ENCODE measurements at regions of chr14 and their contacts with region 1.

Region 1: GRCh38 chr14:66662374-66662773 is 154.4 kb downstream of the GPHN start:
- DNase-seq: no peak
- H3K4me3 Mint-ChIP-seq: no peak overlapping the region
- H3K27ac Mint-ChIP-seq: no peak overlapping the region
- H3K4me1 Mint-ChIP-seq: no peaks in the 10 kb centered on the region
- H3K27me3 Mint-ChIP-seq: no peaks in the 10 kb centered on the region

Region 2: DNA sequence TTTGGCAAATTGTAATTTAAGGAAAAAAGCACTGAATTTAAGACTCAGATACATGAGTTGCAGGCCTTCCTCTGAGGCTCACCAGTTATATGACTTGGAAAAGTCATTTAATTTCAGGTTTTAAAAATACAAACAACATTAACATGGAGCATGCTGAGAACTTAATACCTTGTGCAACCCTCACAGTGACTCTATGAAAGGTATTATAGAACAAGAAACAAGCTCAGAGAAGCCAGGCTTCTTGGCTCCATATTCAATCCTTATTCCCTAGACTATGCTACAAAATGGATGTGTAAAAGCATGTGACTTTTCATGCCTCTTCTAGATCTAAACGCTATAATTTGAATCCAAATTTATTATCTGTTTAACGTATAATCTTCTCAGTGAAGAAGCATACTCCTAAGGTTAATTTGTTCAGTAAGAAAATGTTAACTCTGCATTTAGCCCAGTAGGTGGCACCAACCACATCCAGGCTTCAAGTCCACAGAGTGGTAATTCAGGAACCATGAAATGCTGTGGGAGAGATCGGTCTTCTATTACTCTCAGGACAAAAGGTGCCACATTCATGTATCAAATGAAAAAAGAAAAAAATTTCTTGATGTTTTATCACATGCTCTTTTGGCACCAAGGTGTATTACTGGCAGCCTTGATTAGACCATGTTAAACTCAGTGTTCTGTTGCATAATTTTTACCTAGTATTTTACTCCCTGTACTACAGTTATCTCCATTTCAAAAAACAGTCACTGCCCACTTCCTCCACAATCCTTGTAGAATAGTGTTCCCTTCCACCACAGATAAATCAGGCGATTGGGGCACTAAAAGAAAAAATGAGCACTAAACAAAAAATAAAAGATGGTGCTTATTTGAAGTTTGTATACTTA is 166.9 kb before region 1 on chr14:
- intact Hi-C with region 1: loop called (anchors 5 kb)
- DNase-seq: peak; percentile 12
- H3K4me3 Mint-ChIP-seq: no peak overlapping the region
- H3K27ac Mint-ChIP-seq: no peak overlapping the region
- H3K4me1 Mint-ChIP-seq: peaks cover 19% of the 10 kb centered on the region
- H3K27me3 Mint-ChIP-seq: peaks cover 22% of the 10 kb centered on the region